ENCODE measurements at regions of chrX and their contacts with region 1.

Region 1: GRCh38 chrX:20141281-20142220 is at the start of gene EIF1AX:
- DNase-seq: peak; percentile 97
- H3K4me3 Mint-ChIP-seq: peak within 1 kb of the TSS; percentile 81
- H3K27ac Mint-ChIP-seq: peak within 1 kb of the TSS; percentile 80
- H3K4me1 Mint-ChIP-seq: peaks cover 38% of the 10 kb centered on the region
- H3K27me3 Mint-ChIP-seq: no peaks in the 10 kb centered on the region
- total RNA-seq, gene EIF1AX: 106 to 109 TPM

Region 2: GRCh38 chrX:19094654-19095053 is 1046.9 kb before region 1 on chrX:
- CTCF ChIA-PET with region 1: no interaction called
- intact Hi-C with region 1: no loop called
- DNase-seq: no peak
- H3K4me3 Mint-ChIP-seq: no peak overlapping the region
- H3K27ac Mint-ChIP-seq: no peak overlapping the region
- H3K4me1 Mint-ChIP-seq: no peaks in the 10 kb centered on the region
- H3K27me3 Mint-ChIP-seq: peaks cover 2% of the 10 kb centered on the region

Region 3: DNA sequence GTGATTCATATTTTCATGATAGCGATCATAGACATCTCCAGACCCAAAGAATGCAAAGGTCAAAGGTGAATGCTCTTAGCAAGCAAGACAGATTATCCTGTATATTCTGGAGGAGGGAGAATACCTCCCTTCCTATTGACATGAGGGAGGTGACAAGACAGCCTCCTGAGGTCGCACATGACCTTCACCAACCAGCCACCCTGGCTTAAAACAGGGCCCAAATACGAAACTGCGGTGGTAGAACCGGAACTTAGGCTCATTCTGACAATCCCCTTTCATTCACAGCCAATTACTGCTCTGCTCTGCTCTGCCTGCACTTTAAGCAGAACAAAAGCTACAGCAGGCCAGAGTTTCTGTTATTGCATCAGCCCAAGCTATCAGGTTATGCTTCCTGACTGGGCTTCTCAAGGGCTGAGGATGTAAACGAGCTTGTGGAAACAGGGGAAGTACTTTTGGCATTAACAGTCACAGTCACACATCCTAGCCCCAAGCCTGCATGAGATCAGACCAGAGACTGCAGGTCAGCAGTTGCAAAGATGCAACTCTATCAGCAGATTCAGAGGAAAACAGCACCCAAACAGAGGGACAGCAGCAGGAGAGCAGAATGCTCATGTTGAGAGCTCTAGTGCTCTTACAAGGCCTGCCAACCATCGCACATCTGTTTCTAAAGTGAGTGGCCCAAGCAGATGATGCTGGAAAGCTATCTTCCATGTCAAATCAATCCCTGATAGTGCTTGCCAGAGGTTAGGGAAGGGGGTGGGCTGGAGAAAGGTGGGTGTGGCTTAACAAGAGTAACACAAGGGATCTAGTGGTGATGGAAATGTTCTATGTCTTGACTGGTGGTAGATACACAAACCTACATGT is 575.0 kb before region 1 on chrX:
- CTCF ChIA-PET with region 1: no interaction called
- intact Hi-C with region 1: loop called (anchors 5 kb)
- DNase-seq: peak; percentile 53
- H3K4me3 Mint-ChIP-seq: peak overlapping the region; percentile 26
- H3K27ac Mint-ChIP-seq: peak overlapping the region; percentile 90
- H3K4me1 Mint-ChIP-seq: peaks cover 49% of the 10 kb centered on the region
- H3K27me3 Mint-ChIP-seq: no peaks in the 10 kb centered on the region

Region 4: DNA sequence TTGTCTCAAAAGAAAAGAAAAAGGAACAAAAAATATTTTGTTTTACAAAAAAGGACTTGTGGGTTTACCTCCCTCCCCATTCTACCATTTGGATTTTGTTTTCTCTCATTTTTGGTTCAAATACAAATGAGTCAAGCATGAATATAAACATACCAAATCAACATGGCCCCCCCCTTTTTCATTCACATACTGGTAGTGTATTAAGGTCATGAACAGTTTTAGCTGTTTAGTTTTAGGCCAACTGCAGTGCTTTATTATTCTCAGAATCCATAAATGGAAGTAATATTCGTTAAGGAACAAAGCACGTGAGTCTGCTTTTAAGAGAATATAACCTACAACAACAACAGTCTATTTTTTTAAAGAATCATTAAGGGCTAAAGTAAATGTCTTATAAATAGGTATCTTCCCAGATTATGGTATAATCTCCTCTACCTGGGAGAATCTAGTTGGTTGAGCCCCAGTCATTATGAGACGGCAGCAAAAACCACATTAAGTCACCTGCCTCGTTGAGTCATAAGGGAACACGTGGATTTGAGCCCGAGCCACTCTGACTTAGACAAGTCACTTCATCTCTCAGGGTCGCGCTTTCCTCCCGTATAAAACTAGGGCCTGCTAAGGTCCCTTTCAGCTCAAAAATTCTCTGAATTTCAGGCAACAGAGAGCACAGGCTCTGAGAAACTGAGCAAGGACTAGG is 177.4 kb before region 1 on chrX:
- CTCF ChIA-PET with region 1: no interaction called
- intact Hi-C with region 1: loop called (anchors 5 kb)
- DNase-seq: peak; percentile 77
- H3K4me3 Mint-ChIP-seq: no peak overlapping the region
- H3K27ac Mint-ChIP-seq: no peak overlapping the region
- H3K4me1 Mint-ChIP-seq: peaks cover 22% of the 10 kb centered on the region
- H3K27me3 Mint-ChIP-seq: no peaks in the 10 kb centered on the region

Region 5: DNA sequence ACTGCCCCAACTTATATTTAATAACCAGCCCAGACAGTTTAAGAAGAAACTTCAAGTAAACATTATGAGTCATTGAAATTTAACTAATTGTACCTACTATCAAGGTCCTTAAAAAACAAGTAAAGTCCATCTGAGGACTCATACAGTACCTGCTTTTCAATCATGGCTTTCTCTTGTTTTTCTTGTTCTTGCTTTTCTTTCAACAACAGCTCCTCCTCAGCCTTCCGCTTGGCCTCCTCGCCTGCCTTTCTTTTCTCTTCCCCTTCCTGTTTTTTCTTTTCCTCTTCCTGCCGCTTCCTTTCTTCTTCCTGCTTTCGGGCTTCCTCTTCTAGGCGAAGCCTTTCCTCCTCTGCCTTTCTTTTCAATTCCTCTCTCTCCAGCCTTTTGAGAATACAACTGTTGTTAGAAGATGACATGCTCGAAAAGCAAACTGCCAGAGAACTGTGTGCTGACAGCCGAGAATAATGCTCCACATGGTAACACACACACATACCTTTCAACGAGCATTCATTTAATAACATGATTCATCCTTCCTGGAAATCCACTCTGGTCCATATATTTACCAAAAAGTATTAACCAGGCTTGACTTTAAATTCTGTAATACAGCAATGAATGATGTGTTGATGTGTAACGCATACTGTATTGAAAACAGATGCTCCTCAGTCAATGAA is 125.5 kb before region 1 on chrX:
- CTCF ChIA-PET with region 1: no interaction called
- intact Hi-C with region 1: no loop called
- DNase-seq: no peak
- H3K4me3 Mint-ChIP-seq: no peak overlapping the region
- H3K27ac Mint-ChIP-seq: no peak overlapping the region
- H3K4me1 Mint-ChIP-seq: no peaks in the 10 kb centered on the region
- H3K27me3 Mint-ChIP-seq: no peaks in the 10 kb centered on the region

Region 6: DNA sequence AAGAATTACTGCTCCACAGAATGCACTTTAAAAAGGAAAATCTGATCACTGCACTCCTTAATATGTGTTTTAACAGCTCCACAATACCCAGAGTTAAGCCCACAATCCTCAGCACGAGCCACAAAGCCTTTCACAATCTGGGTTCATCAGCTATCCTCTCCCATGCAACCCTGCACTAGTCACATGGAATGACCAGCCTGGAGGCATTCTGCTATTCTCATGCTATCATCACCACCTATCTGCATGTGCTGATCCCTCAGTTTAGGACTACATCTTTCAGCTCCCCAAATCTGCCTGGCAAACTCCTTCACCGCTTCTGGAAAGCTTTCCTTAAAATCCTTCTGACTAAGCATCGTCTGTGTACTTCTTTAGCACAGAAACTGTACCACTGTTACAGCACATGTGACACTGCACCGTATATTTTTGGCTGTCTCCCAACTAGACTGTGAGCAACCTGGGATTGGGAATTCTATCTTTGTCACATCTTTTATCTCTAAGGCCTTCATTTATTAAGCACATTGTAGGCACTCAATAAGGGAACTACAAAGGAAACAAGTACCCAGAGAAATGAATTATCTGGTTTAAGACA is 18.3 kb after region 1 on chrX:
- CTCF ChIA-PET with region 1: no interaction called
- intact Hi-C with region 1: no loop called
- DNase-seq: no peak
- H3K4me3 Mint-ChIP-seq: no peak overlapping the region
- H3K27ac Mint-ChIP-seq: no peak overlapping the region
- H3K4me1 Mint-ChIP-seq: no peaks in the 10 kb centered on the region
- H3K27me3 Mint-ChIP-seq: no peaks in the 10 kb centered on the region

Region 7: DNA sequence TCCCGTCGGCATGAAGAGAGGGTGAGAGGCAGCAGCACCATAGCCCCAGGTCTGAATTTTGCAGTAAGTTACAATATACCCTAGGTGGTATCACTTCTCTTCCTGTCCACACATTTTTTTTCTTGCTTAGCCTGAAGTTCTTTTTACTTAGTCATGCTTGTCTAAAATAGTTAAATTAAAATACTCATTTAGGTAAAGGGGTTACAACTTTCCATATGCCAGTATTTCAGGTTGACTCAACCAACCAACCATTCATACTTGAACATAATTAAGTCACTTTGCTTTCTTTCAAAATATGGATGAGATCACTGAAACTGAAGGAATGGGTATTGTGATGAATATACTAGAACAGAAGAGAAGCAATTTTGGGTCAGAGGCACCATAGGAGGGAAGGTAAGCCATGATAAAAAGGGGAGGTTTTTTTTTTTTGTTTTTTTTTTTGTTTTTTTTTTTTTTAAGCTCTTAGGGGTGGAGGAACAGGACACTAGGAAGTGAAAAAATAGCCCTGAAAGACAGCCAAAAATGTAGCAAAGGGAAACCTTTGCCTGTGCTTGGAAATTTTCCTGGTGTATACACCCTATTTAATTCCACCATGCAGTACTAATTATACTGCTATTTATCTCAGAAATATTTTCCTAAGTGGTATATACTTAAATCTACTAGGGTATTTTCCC is 83.4 kb after region 1 on chrX:
- CTCF ChIA-PET with region 1: interaction called, 3 read pairs
- intact Hi-C with region 1: loop called (anchors 2 kb)
- DNase-seq: no peak
- H3K4me3 Mint-ChIP-seq: no peak overlapping the region
- H3K27ac Mint-ChIP-seq: no peak overlapping the region
- H3K4me1 Mint-ChIP-seq: peaks cover 37% of the 10 kb centered on the region
- H3K27me3 Mint-ChIP-seq: no peaks in the 10 kb centered on the region